ENCODE measurements at regions of chr9 and their contacts with region 1.

Region 1: DNA sequence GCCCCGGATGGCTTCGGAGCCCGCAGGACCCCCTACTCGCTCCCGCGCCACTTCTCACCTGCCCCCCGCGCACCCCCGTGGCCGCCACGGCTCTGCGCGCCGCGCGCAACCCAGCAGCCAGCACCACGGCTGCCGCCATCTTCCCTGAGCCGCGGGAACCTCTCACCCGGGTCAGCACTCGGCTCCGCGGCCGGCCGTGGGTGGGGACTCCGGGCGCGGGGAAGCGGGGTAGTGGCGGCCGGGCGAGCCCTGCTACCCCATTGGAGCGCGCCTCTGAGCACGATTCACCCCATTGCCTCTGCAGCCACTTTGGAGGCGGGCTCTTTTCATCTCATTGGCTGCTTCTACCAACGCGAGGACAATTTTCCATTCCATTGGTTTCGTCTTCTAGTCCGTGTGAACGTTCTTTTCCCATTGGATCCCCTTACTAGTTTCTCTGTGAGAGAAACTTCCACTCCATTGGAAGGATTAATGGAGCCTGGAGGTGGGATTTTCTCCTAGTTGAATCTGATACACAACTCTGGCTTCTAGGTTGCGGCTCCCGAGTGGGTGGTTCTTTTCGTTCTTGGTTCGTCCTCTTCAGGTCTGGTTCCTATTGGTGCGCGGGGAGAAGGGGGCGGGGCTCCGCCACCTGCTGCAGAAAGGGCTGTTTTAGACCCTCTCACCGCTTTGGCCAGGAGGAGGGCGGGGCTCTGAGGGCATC is at the start of gene HINT2:
- DNase-seq: peak; percentile 100
- ATAC-seq: peak; percentile 82
- H3K4me3 Mint-ChIP-seq: peak within 1 kb of the TSS; percentile 91
- H3K27ac Mint-ChIP-seq: peak within 1 kb of the TSS; percentile 95
- H3K4me1 Mint-ChIP-seq: peaks cover 47% of the 10 kb centered on the region
- H3K27me3 Mint-ChIP-seq: peaks cover 14% of the 10 kb centered on the region
- total RNA-seq, gene HINT2: 74.7 to 76.8 TPM

Region 2: GRCh38 chr9:35756275-35757225 is 58.4 kb before region 1 on chr9:
- CTCF ChIA-PET with region 1: interaction called, 14 read pairs
- POLR2A ChIA-PET with region 1: no interaction called
- DNase-seq: peak; percentile 87
- ATAC-seq: peak; percentile 87
- H3K4me3 Mint-ChIP-seq: peak overlapping the region; percentile 87
- H3K27ac Mint-ChIP-seq: peak overlapping the region; percentile 94
- H3K4me1 Mint-ChIP-seq: peaks cover 35% of the 10 kb centered on the region
- H3K27me3 Mint-ChIP-seq: no peaks in the 10 kb centered on the region

Region 3: GRCh38 chr9:35835216-35835632 is 20.2 kb after region 1 on chr9:
- CTCF ChIA-PET with region 1: interaction called, 12 read pairs
- POLR2A ChIA-PET with region 1: interaction called, 4 read pairs
- DNase-seq: peak; percentile 41
- ATAC-seq: no peak
- H3K4me3 Mint-ChIP-seq: no peak overlapping the region
- H3K27ac Mint-ChIP-seq: no peak overlapping the region
- H3K4me1 Mint-ChIP-seq: peaks cover 15% of the 10 kb centered on the region
- H3K27me3 Mint-ChIP-seq: no peaks in the 10 kb centered on the region